ENCODE measurements at regions of chr20 and their contacts with region 1.

Region 1: DNA sequence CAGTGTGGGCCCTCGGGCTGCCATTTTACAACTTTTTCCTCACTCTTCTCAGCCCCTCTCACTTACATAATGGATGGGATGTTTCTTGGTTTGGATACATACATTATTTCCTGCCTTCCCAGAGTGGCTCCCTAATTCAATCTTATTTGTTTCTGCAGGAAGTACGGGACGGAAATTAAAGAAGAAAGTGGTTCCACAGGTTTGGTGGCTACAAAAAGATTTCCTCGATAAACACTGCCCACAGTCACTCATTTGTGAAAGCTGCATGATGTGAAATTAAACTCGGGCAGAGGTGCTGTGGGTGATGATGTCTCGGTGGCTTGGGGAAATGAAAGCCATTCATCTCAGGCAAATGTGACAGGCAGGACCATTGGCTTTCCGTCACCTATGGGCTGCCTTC is 119.5 kb upstream of the KCNG1 start:
- DNase-seq: no peak
- H3K4me3 Mint-ChIP-seq: no peak overlapping the region
- H3K27ac Mint-ChIP-seq: no peak overlapping the region
- H3K4me1 Mint-ChIP-seq: no peaks in the 10 kb centered on the region
- H3K27me3 Mint-ChIP-seq: no peaks in the 10 kb centered on the region
- CTCF ChIP-seq: no peak

Region 2: DNA sequence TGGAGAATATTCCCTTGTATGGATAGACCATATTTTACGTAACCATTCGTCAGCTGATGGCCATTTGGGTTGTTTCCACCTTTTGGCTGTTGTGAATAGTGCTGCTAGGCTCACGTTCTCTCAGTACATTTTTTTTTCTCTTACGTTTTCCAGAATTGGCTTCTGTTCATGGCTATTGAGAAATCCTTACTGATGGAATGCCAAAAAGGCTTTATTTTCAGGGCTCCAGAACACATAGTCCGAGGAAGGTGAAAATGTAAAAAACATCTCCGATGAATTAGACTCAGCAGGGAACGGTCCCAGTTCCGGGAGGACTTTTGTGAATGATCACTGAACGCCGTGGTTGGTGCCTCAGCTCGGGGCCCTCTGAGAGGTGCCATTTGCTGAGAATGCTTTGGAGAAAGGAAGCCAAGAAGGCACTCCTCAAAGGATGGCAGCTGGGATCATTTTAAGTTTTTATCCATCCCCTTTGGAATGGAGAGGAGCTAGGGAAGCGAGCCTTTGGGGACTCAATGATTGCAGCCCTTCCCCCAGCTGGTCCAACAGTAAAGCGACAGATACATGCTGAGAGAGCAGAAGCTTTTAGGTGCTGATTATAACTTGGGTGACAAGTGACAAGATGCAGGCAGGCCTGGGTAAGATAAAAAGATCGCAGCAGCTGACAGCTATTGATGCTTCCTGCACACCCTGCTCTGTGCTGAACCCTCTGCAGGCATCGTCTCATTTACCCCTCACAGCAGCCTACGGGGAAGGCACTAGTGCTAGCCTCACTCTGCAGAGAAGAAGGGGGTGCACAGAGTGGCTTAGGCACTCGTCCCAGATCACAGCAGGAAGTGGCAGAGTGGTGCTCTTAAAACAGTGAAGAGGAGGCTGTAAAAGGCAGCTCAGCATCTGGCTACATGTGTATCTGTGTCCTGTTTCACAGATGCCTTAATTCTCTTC is 13.9 kb after region 1 on chr20:
- CTCF ChIA-PET with region 1: interaction called, 3 read pairs
- POLR2A ChIA-PET with region 1: interaction called, 11 read pairs
- intact Hi-C with region 1: no loop called
- DNase-seq: peak; percentile 58
- H3K4me3 Mint-ChIP-seq: peak overlapping the region; percentile 41
- H3K27ac Mint-ChIP-seq: peak overlapping the region; percentile 40
- H3K4me1 Mint-ChIP-seq: peaks cover 21% of the 10 kb centered on the region
- H3K27me3 Mint-ChIP-seq: peaks cover 43% of the 10 kb centered on the region
- CTCF ChIP-seq: no peak

Region 3: GRCh38 chr20:51372176-51372803 is 229.9 kb after region 1 on chr20:
- CTCF ChIA-PET with region 1: no interaction called
- POLR2A ChIA-PET with region 1: no interaction called
- intact Hi-C with region 1: no loop called
- DNase-seq: peak; percentile 75
- H3K4me3 Mint-ChIP-seq: no peak overlapping the region
- H3K27ac Mint-ChIP-seq: no peak overlapping the region
- H3K4me1 Mint-ChIP-seq: no peaks in the 10 kb centered on the region
- H3K27me3 Mint-ChIP-seq: no peaks in the 10 kb centered on the region
- CTCF ChIP-seq: peak; percentile 90